GM10248 (cell line): ENCODE measurements at regions of chr13 and their contacts with region 1.

Region 1: GRCh38 chr13:98653463-98653985 is 76.6 kb upstream of the STK24 start:
- DNase-seq: peak; percentile 85
- CTCF ChIP-seq: peak; percentile 92

Region 2: DNA sequence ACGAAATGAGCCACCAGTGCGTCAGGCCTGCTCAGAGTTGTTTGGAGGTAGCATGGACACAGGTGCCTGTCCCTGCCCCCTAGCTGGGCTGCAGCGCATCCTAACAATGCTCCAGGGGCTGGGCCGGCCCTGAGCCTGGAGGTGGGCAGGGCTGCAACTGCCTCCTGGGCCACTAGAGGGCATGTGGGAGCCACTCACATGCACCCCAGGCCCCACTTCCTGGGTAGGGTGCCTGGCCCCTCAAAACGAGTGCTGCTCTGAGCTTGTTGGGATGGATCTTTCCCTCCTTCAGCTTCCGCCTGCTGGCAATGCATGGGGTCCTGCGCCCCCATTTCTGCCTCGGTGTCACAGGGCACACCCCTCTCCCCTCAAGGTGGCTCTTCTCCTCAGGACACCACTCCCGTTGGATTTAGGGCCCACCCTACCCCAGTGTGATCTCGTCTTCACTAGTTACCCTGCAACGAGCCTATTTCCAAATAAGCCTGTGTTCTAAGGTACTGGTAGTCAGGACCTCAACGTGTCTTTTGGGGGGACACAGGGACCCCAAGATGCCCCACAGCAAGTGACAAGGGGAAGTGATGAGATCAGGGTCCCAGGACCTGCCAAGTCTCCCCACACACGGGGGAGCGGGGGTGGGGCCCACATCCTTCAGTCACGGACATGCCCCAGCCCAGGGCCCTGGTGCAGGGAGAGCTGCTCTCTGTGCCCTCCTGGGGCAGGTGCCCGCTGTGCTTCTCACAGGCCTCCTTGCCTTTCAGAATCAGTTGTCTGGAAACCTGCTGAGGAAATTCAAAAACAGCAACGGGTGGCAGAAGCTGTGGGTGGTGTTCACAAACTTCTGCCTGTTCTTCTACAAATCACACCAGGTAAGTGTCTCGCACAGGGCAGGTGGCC is 207.9 kb before region 1 on chr13:
- CTCF ChIA-PET with region 1: interaction called, 208 read pairs
- POLR2A ChIA-PET with region 1: no interaction called
- DNase-seq: peak; percentile 91
- CTCF ChIP-seq: peak; percentile 99

Region 3: GRCh38 chr13:98484289-98485219 is 169.0 kb before region 1 on chr13:
- CTCF ChIA-PET with region 1: interaction called, 36 read pairs
- POLR2A ChIA-PET with region 1: no interaction called
- DNase-seq: peak; percentile 76
- CTCF ChIP-seq: no peak

Region 4: DNA sequence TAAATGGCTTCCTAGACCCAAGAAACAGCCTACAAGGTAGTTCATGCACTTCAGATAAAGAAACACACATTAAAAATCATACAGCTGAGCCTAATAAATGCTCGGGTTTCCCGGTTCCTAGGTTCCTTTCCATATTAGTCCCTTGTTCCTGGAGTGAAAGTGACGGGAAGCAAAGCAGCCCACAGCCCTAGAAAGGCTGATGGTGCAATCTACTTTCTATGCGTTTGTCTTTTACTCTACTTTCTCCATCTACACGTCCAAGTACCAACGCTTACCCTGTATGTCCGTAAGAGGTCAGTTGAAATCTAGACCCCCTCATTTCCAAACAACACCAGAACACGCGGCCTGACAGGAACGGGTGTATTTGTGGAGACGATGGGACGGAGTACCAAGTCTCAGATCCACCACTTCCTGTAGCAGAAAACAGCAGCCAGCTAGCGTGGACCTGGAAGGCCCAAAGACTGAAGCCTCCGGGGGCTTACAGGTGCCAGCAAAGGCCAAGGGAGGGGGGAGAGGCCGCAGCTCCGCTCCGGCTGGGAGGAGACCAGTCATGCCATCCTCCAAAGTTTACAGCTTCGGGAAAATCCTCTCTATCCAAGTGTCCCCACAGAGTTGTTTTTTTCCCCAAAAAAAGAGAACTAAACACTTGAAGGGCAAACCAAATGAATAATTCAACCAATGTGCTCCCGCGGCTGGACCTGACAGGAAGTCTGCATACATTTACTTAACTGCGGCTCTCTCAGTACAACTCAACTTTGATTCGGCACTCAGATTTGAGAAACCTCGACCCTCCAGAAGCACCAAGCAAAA is 110.8 kb before region 1 on chr13:
- CTCF ChIA-PET with region 1: interaction called, 13 read pairs
- POLR2A ChIA-PET with region 1: no interaction called
- DNase-seq: peak; percentile 52
- CTCF ChIP-seq: no peak

Region 5: GRCh38 chr13:98664039-98664438 is 10.5 kb after region 1 on chr13:
- CTCF ChIA-PET with region 1: interaction called, 21 read pairs
- POLR2A ChIA-PET with region 1: no interaction called
- DNase-seq: no peak
- CTCF ChIP-seq: no peak

Region 6: DNA sequence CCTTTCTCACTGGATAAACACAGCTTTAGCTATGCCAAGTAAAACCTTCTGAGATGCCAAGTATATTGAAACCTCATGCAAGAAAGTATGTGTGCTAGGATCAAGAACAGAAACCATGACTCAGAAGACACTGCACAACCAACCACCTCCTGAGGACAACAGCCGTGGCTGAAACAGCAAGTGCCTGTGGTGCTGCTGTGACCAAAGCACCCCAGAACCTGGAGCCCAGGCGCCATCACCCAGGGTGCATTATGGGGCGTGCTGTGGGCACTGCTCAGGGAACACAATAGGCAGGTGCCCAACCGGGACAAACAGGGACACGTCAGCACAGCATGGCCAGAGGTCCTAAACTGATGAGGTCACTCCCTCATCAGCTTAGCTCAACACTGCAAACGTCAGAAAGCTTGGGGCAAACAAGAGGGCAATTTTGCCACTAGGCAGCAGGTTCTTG is 200.3 kb after region 1 on chr13:
- CTCF ChIA-PET with region 1: no interaction called
- POLR2A ChIA-PET with region 1: no interaction called
- DNase-seq: peak; percentile 56
- CTCF ChIP-seq: no peak